ENCODE measurements at regions of chr20 and their contacts with region 1.

Region 1: DNA sequence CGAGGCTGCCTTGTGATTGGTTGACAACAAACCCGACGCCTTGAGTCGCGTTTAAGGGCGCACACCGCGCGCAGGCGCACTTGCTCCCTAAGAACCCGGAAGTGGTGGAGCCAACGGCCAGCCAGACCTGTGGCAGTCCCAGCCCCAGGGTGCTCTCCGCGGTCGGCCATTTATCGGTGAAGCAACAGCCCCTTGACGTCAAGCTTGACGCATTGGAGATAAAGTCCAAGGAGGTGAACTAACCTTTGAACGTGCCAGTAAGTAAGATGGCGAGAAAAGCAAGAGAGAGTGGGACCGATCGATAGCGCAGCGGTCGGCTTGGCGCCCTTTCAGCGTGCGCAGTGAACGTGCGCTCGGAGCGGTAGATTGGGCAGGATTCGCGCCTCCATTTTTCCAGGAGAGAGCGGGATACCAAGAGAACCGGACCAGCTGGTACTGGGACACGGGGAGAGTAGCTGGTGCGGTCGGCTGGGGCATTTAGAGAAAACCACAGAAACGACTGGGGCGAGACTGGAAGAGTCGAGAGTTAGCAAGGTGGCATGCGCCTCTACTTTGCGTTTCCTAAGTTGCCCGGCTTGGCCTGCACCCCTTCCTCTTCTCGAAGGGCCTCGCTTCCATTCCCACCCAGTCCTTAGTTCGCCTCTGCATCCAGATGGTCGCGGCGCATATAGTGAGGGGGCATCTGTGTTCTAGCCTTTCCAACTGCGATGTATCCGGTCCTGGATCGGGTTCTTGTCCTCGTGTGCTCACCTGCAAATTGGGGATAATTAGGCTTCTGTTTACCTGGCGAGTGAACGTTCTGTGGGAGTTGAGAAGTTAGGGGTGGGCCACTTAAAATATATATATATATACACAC is at the start of gene CSTF1:
- DNase-seq: peak; percentile 99
- ATAC-seq: peak; percentile 92
- H3K4me3 Mint-ChIP-seq: no peak within 1 kb of the TSS
- H3K27ac Mint-ChIP-seq: no peak within 1 kb of the TSS
- H3K4me1 Mint-ChIP-seq: peaks cover 31% of the 10 kb centered on the region
- H3K27me3 Mint-ChIP-seq: no peaks in the 10 kb centered on the region
- CTCF ChIP-seq: no peak
- total RNA-seq, gene CSTF1: 63.4 to 66.2 TPM

Region 2: GRCh38 chr20:56468316-56469082 is 76.0 kb after region 1 on chr20 and contains the start of gene RTF2:
- CTCF ChIA-PET with region 1: interaction called, 8 read pairs
- POLR2A ChIA-PET with region 1: interaction called, 9 read pairs
- intact Hi-C with region 1: loop called (anchors 5 kb)
- DNase-seq: peak; percentile 98
- ATAC-seq: peak; percentile 98
- H3K4me3 Mint-ChIP-seq: peak within 1 kb of the TSS; percentile 100
- H3K27ac Mint-ChIP-seq: peak within 1 kb of the TSS; percentile 100
- H3K4me1 Mint-ChIP-seq: peaks cover 37% of the 10 kb centered on the region
- H3K27me3 Mint-ChIP-seq: no peaks in the 10 kb centered on the region
- CTCF ChIP-seq: no peak
- total RNA-seq, gene RTF2: 72.0 to 76.7 TPM

Measured in activated CD8-positive, alpha-beta T cell treated with anti-CD3 and anti-CD28 coated beads for 36 hours (primary cell).